AG04449 (cell line): ENCODE measurements at regions of chr20 and their contacts with region 1.

Region 1: DNA sequence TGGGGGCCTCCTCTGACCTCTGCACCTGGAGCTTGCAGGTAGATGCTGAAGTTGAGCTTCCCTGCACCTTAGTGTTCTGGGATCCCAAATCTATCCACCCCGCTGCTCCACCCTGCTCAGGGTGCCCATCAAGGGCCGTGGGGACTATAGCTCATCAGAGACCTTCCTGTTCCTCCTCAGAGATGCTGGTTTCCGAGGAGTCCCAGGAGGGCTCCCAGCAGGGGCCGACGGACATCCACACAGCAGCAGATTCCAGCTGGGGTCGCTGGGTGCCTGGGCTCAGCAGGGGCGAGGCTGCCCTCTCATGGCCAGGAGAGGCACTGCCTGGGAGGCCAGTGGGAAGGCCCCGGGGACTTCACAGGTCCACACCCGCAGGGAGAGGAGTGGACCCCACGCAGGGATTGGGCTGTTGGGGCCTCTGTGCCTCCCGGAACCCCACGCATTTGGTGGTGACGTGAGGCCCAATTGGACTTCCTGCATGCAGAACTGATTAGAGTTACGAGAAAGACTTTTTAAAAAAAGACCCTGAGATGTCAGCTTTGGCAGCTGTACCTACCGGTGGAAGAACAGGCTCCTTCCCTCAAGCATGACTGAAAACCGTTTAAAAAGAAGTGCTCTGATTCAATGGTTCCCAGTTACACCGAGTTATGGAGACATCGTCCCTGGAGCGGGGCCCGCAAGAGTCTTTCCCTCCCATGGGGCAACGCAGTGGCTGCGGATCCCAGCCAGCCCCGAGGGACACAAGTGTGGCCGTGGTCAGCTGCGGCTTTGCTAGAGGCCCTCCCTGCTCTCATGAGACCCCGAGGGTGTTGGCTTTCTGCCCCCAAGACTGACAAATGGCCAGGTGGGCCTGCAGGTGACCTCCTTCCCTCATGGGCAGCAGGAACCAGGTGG is 25.3 kb upstream of the SLCO4A1 start:
- DNase-seq: no peak
- H3K4me3 ChIP-seq: no peak overlapping the region
- CTCF ChIP-seq: peak; percentile 99

Region 2: DNA sequence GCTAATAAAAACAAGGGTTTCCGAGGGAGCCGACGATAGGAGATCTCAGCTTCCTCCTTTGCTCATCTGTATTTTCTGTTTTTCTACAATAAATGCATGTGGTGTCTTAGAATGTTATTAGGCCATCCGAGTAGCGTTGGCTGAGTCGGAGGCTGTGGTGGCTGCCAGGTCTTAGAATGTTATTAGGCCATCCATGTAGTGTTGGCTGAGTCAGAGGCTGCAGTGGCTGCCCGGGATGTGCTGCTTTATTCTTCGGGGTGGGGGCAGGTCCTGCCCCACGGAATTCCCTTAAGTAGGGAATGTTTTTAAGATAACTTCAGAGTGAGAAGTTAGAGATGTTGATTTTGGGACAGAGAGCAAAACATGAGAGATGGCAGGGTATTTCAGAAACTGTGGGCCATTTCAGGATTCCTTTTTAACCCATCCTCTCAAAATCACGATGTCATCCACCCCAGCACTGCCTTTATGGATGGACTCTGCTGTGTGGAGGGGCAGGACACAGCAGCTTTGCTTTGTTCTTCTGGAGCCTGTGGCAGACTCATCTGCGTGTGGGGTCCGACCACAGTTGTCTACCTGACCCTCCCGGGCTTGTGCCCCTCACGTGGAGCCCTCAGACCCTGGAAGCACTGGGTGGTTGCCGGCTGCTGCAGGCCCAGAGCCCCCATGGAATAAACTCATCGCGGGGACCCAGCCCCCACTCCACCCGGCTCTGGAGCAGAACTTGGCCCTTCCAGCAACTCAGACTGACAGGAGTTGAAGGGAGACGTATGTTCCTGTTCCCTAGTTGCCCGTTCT is 358.3 kb before region 1 on chr20:
- CTCF ChIA-PET with region 1: no interaction called
- POLR2A ChIA-PET with region 1: no interaction called
- DNase-seq: peak; percentile 47
- H3K4me3 ChIP-seq: no peak overlapping the region
- CTCF ChIP-seq: no peak

Region 3: DNA sequence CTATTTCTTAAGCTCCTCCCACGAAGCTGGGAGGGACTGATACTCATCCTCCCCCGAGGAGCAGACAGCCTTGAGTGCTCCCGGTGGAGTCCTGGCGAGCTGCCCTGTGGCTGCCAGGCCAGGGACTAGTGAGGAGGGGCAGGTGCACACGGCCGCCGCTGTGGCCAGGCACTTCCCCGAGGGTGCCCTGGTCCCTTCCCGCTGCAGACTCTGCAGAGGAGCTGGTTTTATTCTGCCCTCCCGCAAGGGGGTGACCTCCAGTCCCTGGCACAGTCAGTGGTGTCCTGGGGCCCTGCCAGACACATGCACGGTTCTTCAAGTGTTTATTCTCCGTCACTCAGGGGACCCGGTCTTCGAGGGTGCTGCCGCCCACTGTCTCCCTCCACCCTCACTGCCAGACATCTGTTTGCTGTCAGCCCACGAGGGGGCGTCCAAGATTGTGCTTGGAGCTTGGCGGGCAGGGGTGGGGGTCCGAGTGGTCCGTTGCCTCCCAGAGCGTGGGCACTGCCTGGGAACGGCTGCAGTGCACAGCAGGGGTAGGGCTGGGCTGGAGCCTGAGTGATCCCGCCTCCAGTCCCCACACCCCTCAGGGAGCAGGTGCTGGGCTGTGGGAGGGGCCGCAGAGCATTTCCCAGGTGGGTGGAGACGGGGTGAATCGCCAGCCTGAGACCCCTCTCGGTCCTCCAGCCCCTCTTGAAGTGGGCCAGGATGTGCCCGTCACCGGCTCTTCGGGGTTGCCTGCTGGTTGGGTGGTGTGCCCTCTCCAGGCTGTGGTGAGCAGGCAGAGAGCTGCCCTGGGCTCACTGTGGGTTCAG is 206.8 kb before region 1 on chr20:
- CTCF ChIA-PET with region 1: interaction called, 19 read pairs
- POLR2A ChIA-PET with region 1: no interaction called
- DNase-seq: no peak
- H3K4me3 ChIP-seq: no peak overlapping the region
- CTCF ChIP-seq: peak; percentile 47

Region 4: DNA sequence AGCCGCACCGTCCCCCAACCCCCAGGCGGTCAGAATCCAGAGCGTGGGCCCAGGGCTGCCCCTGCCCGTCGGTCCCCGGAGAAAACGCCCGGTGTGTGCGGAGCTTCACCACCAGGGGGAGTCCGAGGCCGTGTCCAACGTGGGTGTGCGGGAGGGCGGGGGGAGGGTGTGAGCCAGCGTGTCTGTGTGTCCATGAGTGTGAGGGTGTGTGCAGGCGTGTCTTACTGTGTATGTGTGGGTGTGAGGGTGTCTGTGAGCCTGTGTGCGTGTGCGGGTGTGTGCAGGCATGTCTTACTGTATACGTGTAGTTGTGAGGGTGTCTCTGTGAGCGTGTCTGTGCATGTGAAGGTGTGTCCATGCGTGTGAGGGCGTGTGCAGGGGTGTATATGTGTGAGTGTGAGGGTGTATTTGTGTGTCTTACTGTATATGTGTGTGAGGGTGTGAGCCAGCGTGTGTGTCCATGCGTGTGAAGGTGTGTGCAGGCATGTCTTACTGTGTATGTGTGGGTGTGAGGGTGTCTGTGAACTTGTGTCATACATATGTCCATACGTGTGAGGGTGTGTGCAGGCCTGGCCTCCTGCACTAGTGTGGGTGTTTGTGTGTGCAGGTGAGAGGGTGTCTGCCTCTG is 116.6 kb before region 1 on chr20:
- CTCF ChIA-PET with region 1: interaction called, 24 read pairs
- POLR2A ChIA-PET with region 1: no interaction called
- DNase-seq: no peak
- H3K4me3 ChIP-seq: no peak overlapping the region
- CTCF ChIP-seq: peak; percentile 93

Region 5: DNA sequence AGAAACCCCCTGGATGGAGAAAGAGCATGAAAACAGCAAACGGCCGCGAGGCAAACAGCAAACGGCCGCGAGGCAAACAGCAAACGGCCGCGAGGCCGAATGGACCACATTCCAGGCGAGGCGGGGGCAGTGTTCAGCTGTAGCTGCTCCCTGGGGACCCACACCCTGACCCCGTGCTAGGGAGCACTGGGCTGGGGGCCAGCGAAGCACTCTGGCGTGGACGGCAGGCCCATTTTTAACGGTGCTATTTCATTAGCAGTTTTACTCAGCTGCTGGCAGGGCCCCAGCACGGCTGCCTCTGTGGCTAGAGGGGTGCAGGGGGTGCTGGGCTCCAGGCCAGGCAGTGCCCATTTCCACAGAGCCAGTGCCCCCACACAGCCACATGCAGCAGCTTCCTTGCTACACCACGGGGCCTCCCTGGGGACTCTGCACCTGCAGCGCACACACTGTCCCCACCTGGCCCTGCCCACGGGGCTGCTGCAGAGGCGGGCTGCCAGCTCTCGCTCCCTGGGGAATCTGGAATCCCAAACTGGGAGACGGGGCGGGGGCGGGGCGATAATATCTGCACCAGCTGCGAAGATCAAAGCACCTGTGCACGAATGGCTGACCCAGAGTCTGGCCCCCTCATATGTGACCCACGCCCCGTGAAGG is 10.3 kb before region 1 on chr20:
- CTCF ChIA-PET with region 1: interaction called, 15 read pairs
- POLR2A ChIA-PET with region 1: no interaction called
- DNase-seq: no peak
- H3K4me3 ChIP-seq: no peak overlapping the region
- CTCF ChIP-seq: no peak